Ascending aorta (tissue), 2 donors: ENCODE measurements at regions of chr1 and their contacts with region 1.

Region 1: GRCh38 chr1:6889875-6890480 is 104.7 kb downstream of the CAMTA1 start:
- DNase-seq: peak in 1 of 2 donors; percentile 78
- H3K4me3 ChIP-seq: no peak overlapping the region
- H3K27ac ChIP-seq: no peak overlapping the region
- H3K4me1 ChIP-seq: peaks cover 0 to 3% of the 10 kb centered on the region in 2 donors
- H3K27me3 ChIP-seq: no peaks in the 10 kb centered on the region
- CTCF ChIP-seq: peak; percentile 64 to 82 (median 70)

Region 2: DNA sequence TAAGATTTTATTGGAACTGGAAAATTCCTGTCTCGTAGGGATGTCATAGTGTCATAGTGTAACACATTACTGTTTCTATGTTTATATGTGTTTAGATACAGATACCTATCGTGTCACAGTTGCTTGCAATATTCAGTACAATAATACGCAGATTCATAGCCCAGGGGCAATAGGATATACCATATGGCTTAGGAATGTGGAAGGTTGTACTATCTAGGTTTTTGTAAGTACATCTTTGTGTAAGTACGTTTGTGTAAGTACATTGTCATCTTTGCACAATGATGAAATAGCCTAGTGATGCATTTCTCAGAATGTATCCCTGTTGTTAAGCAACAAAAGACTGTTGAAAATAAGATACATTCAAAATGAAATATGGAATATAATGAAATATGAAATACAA is 35.8 kb before region 1 on chr1:
- intact Hi-C with region 1: no loop called
- DNase-seq: no peak
- H3K4me3 ChIP-seq: no peak overlapping the region
- H3K27ac ChIP-seq: no peak overlapping the region
- H3K4me1 ChIP-seq: peaks cover 0 to 2% of the 10 kb centered on the region in 2 donors
- H3K27me3 ChIP-seq: no peaks in the 10 kb centered on the region
- CTCF ChIP-seq: no peak

Region 3: DNA sequence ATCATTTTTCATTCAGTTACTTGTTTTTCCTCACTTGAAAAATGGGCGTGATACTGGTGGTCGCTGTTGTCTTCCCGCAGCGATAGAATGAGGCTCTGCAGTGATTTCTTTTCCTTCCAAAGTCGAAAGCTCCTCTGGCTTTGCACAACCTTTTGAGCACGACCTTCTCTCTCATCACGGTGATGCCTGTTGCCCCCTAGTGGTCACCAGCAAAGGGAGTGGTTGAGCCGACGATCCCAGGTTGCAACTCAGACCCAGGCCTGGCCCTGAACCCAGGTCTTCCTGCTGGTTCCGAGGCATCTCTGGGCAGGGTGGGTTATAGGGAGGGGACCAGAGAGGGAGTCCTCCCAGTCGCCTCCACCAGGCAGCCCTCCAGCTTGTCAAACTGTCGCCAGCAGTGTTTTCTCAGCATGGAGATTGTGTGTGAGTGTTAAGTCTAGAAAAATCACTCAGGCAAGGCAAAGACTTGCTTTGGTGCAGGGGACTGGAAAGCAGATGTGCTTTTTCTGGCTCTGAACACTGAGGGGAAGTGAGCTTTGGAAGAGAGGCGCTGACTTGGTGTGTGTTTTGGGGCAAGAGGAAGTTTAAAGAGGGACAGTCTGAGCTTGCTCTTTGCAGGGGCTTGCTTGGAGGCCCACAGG is 180.5 kb after region 1 on chr1:
- intact Hi-C with region 1: loop called (anchors 5 kb)
- DNase-seq: peak in 1 of 2 donors; percentile 76
- H3K4me3 ChIP-seq: peak overlapping the region; percentile 42 to 51
- H3K27ac ChIP-seq: no peak overlapping the region
- H3K4me1 ChIP-seq: no peaks in the 10 kb centered on the region
- H3K27me3 ChIP-seq: no peaks in the 10 kb centered on the region
- CTCF ChIP-seq: peak; percentile 74 to 85 (median 78)